ENCODE measurements at regions of chr2 and their contacts with region 1.

Region 1: GRCh38 chr2:162301151-162301804 is 17.2 kb downstream of the IFIH1 start:
- DNase-seq: peak; percentile 14
- H3K4me3 ChIP-seq: no peak overlapping the region
- CTCF ChIP-seq: peak; percentile 70

Region 2: GRCh38 chr2:162123806-162124758 is 177.2 kb before region 1 on chr2:
- CTCF ChIA-PET with region 1: interaction called, 24 read pairs
- POLR2A ChIA-PET with region 1: no interaction called
- DNase-seq: no peak
- H3K4me3 ChIP-seq: no peak overlapping the region
- CTCF ChIP-seq: peak; percentile 49

Region 3: GRCh38 chr2:162159446-162159845 is 141.8 kb before region 1 on chr2:
- CTCF ChIA-PET with region 1: interaction called, 254 read pairs
- POLR2A ChIA-PET with region 1: no interaction called
- DNase-seq: no peak
- H3K4me3 ChIP-seq: no peak overlapping the region
- CTCF ChIP-seq: no peak

Region 4: GRCh38 chr2:162196638-162197037 is 104.6 kb before region 1 on chr2:
- CTCF ChIA-PET with region 1: interaction called, 189 read pairs
- POLR2A ChIA-PET with region 1: interaction called, 3 read pairs
- DNase-seq: no peak
- H3K4me3 ChIP-seq: no peak overlapping the region
- CTCF ChIP-seq: no peak

Region 5: GRCh38 chr2:162233197-162233596 is 68.1 kb before region 1 on chr2:
- CTCF ChIA-PET with region 1: interaction called, 67 read pairs
- POLR2A ChIA-PET with region 1: interaction called, 4 read pairs
- DNase-seq: peak; percentile 46
- H3K4me3 ChIP-seq: no peak overlapping the region
- CTCF ChIP-seq: no peak

Region 6: GRCh38 chr2:162282765-162283425 is 18.4 kb before region 1 on chr2:
- CTCF ChIA-PET with region 1: interaction called, 49 read pairs
- POLR2A ChIA-PET with region 1: no interaction called
- DNase-seq: no peak
- H3K4me3 ChIP-seq: no peak overlapping the region
- CTCF ChIP-seq: no peak